ENCODE measurements at regions of chr11 and their contacts with region 1.

Region 1: DNA sequence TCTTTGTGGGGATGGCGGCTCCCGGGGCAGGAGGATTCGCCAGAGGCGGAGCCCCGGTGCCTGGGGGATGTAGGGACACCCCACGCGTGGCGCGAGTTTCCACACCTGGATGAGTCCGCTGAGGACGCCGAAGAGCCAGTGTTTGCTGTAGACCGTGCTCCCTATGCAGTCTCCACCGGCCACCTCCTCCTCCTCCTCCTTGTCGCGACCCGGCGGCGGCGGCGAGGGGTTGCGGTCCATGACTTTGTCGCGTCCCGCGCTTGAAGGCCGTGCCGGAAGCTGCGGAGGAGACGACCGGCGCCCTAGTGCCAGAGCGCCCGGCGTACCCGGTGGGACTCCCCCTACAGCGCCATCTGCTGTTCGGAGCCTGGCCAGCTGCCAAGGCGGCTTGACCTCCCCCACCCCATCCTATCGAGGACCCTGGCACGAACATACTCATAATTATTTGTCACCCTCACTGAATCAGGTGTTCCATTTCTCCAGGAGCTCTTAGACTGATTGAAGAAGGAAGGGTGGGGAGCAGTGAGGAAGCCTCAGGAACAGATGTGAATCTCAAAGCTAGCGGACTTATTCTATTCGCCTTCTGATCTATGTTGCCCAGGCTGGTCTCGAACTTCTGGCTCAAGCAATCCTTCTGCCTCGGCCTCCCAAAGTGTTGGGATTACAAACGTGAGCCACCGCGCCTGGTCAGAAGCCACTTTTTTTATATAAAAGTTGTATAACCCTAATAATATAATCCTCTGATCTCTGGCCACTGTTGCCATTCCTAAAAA is at the start of gene SAAL1:
- DNase-seq: peak; percentile 80 to 89 (median 85)
- H3K4me3 ChIP-seq: peak within 1 kb of the TSS; percentile 60 to 86 (median 73)
- H3K27ac ChIP-seq: peak within 1 kb of the TSS in 1 of 5 donors; percentile 21
- H3K4me1 ChIP-seq: peaks cover 4 to 15% of the 10 kb centered on the region in 2 donors
- H3K27me3 ChIP-seq: no peaks in the 10 kb centered on the region
- CTCF ChIP-seq: peak; percentile 34 to 60 (median 52)
- POLR2A ChIP-seq: peak; percentile 18 to 28
- total RNA-seq, gene SAAL1: 3.7 to 13.2 (median 10.3) TPM

Region 2: GRCh38 chr11:17978553-17979287 is 127.3 kb before region 1 on chr11:
- intact Hi-C with region 1: no loop called
- DNase-seq: peak; percentile 60 to 87 (median 72)
- H3K4me3 ChIP-seq: no peak overlapping the region
- H3K27ac ChIP-seq: no peak overlapping the region
- H3K4me1 ChIP-seq: no peaks in the 10 kb centered on the region
- H3K27me3 ChIP-seq: no peaks in the 10 kb centered on the region
- CTCF ChIP-seq: peak; percentile 68 to 81 (median 71)
- POLR2A ChIP-seq: no peak

Region 3: DNA sequence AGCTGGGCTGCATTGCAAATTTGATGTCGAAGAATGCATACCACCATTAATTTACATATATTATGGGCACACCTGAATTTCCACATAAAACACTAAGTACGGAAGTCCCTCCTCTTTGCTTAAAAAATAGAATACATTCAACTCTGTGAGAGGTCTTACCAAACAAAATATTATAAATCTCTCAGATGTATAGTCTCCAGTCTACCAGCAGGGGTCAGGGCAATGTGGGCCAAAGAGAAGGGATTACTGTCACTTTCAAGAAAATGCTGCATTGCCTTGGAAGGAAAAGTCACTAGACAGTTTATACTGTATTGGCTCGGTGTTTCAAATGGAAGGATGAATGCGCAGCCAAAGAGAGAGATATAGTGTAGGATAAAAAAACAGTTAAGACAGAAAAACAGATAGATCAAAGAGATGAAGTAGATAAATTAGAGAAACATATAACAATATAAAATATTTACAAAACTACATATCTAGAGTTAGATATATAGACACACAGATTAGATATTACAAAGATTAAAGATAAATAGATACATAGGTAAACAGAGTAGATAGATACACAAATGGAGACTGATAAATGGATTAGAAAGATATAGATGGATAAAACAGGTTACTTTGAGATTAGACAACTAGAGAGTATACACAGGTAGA is 114.1 kb before region 1 on chr11:
- intact Hi-C with region 1: loop called in 1 of 2 experiments (anchors 10 kb)
- DNase-seq: peak in 6 of 7 donors; percentile 43 to 62 (median 56)
- H3K4me3 ChIP-seq: no peak overlapping the region
- H3K27ac ChIP-seq: no peak overlapping the region
- H3K4me1 ChIP-seq: no peaks in the 10 kb centered on the region
- H3K27me3 ChIP-seq: no peaks in the 10 kb centered on the region
- CTCF ChIP-seq: peak; percentile 73 to 85 (median 75)
- POLR2A ChIP-seq: no peak

Region 4: GRCh38 chr11:18253231-18253630 is 147.2 kb after region 1 on chr11:
- intact Hi-C with region 1: no loop called
- DNase-seq: no peak
- H3K4me3 ChIP-seq: no peak overlapping the region
- H3K27ac ChIP-seq: no peak overlapping the region
- H3K4me1 ChIP-seq: no peaks in the 10 kb centered on the region
- H3K27me3 ChIP-seq: no peaks in the 10 kb centered on the region
- CTCF ChIP-seq: no peak
- POLR2A ChIP-seq: no peak